ENCODE measurements at regions of chr2 and their contacts with region 1.

Region 1: GRCh38 chr2:225002039-225002655 is 40.1 kb downstream of the DOCK10 start:
- DNase-seq: peak; percentile 83
- ATAC-seq: peak; percentile 68
- H3K4me3 ChIP-seq: no peak overlapping the region
- H3K4me3 Mint-ChIP-seq: peak overlapping the region; percentile 53
- H3K27ac ChIP-seq: peak overlapping the region; percentile 22 to 51
- H3K27ac Mint-ChIP-seq: peak overlapping the region; percentile 90
- H3K4me1 ChIP-seq: peaks cover 19% of the 10 kb centered on the region in 2 donors
- H3K4me1 Mint-ChIP-seq: peaks cover 25% of the 10 kb centered on the region
- H3K27me3 ChIP-seq: no peaks in the 10 kb centered on the region
- H3K27me3 Mint-ChIP-seq: no peaks in the 10 kb centered on the region
- CTCF ChIP-seq: peak; percentile 80

Region 2: GRCh38 chr2:224807153-224807964 is 194.8 kb before region 1 on chr2:
- CTCF ChIA-PET with region 1: interaction called, 3 read pairs
- POLR2A ChIA-PET with region 1: no interaction called
- intact Hi-C with region 1: loop called (anchors 2 kb)
- DNase-seq: no peak
- ATAC-seq: no peak
- H3K4me3 ChIP-seq: no peak overlapping the region
- H3K4me3 Mint-ChIP-seq: no peak overlapping the region
- H3K27ac ChIP-seq: no peak overlapping the region
- H3K27ac Mint-ChIP-seq: no peak overlapping the region
- H3K4me1 ChIP-seq: no peaks in the 10 kb centered on the region
- H3K4me1 Mint-ChIP-seq: no peaks in the 10 kb centered on the region
- H3K27me3 ChIP-seq: no peaks in the 10 kb centered on the region
- H3K27me3 Mint-ChIP-seq: no peaks in the 10 kb centered on the region
- CTCF ChIP-seq: no peak

Region 3: GRCh38 chr2:224894356-224894755 is 107.8 kb before region 1 on chr2:
- CTCF ChIA-PET with region 1: interaction called, 17 read pairs
- POLR2A ChIA-PET with region 1: no interaction called
- intact Hi-C with region 1: loop called (anchors 1 kb)
- DNase-seq: peak; percentile 75
- ATAC-seq: peak; percentile 78
- H3K4me3 ChIP-seq: peak overlapping the region in 2 of 5 experiments; percentile 1 to 16
- H3K4me3 Mint-ChIP-seq: peak overlapping the region; percentile 77
- H3K27ac ChIP-seq: peak overlapping the region; percentile 74 to 86
- H3K27ac Mint-ChIP-seq: peak overlapping the region; percentile 93
- H3K4me1 ChIP-seq: peaks cover 25 to 26% of the 10 kb centered on the region in 2 donors
- H3K4me1 Mint-ChIP-seq: peaks cover 48% of the 10 kb centered on the region
- H3K27me3 ChIP-seq: no peaks in the 10 kb centered on the region
- H3K27me3 Mint-ChIP-seq: no peaks in the 10 kb centered on the region
- CTCF ChIP-seq: no peak

Region 4: GRCh38 chr2:224946895-224947294 is 55.3 kb before region 1 on chr2:
- CTCF ChIA-PET with region 1: interaction called, 54 read pairs
- POLR2A ChIA-PET with region 1: interaction called, 4 read pairs
- intact Hi-C with region 1: loop called (anchors 5 kb)
- DNase-seq: peak; percentile 70
- ATAC-seq: peak; percentile 71
- H3K4me3 ChIP-seq: peak overlapping the region; percentile 44 to 92 (median 71)
- H3K4me3 Mint-ChIP-seq: peak overlapping the region; percentile 88
- H3K27ac ChIP-seq: peak overlapping the region; percentile 75 to 91
- H3K27ac Mint-ChIP-seq: peak overlapping the region; percentile 95
- H3K4me1 ChIP-seq: peaks cover 66 to 76% of the 10 kb centered on the region in 2 donors
- H3K4me1 Mint-ChIP-seq: peaks cover 82% of the 10 kb centered on the region
- H3K27me3 ChIP-seq: no peaks in the 10 kb centered on the region
- H3K27me3 Mint-ChIP-seq: no peaks in the 10 kb centered on the region
- CTCF ChIP-seq: no peak

Region 5: DNA sequence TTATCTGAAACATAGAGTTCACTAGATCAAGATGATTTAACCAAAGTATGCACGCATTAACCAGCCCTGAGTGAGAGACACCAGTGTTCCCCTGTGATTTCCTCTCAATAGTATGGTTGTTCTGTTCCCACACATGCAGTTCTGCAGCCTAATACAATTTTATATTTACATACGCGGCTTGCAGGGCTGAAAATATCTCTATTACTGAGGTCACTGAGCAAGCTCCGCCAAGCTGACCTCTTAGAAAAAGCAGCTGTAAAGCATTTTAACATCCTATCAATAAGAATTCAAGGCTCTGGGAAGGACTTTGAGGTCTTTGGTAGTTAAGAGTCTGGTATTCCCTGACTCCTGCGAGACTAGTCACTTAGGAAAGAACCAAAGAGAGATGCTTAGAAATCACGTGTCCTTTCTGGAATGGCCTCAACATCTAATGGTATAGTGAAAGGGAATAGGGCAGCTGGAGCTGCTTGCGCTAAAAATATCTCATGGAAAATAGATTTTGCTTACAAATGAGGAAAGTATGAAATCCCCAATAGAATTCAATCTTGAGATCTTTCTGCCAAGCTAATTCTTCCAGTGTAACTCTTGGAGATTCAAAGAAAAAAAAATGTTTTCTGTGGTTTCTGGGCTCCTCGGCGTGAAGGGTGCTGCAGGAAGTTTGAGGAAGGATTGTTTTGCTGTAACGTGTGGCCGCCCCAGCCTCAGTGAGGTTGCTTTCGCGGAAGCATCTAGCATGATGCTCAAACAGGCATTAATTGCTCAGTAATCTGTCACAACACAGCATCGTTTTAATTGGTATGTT is 19.0 kb before region 1 on chr2:
- CTCF ChIA-PET with region 1: interaction called, 29 read pairs
- POLR2A ChIA-PET with region 1: interaction called, 3 read pairs
- intact Hi-C with region 1: no loop called
- DNase-seq: peak; percentile 45
- ATAC-seq: peak; percentile 53
- H3K4me3 ChIP-seq: peak overlapping the region in 2 of 5 experiments; percentile 28 to 44
- H3K4me3 Mint-ChIP-seq: peak overlapping the region; percentile 75
- H3K27ac ChIP-seq: peak overlapping the region in 1 of 2 donors; percentile 62
- H3K27ac Mint-ChIP-seq: peak overlapping the region; percentile 85
- H3K4me1 ChIP-seq: peaks cover 30 to 35% of the 10 kb centered on the region in 2 donors
- H3K4me1 Mint-ChIP-seq: peaks cover 47% of the 10 kb centered on the region
- H3K27me3 ChIP-seq: no peaks in the 10 kb centered on the region
- H3K27me3 Mint-ChIP-seq: no peaks in the 10 kb centered on the region
- CTCF ChIP-seq: no peak

Region 6: GRCh38 chr2:225112362-225113126 is 110.4 kb after region 1 on chr2:
- CTCF ChIA-PET with region 1: interaction called, 3 read pairs
- POLR2A ChIA-PET with region 1: no interaction called
- intact Hi-C with region 1: loop called (anchors 10 kb)
- DNase-seq: peak; percentile 33
- ATAC-seq: peak; percentile 60
- H3K4me3 ChIP-seq: no peak overlapping the region
- H3K4me3 Mint-ChIP-seq: peak overlapping the region; percentile 40
- H3K27ac ChIP-seq: peak overlapping the region in 1 of 2 donors; percentile 9
- H3K27ac Mint-ChIP-seq: peak overlapping the region; percentile 67
- H3K4me1 ChIP-seq: peaks cover 17 to 19% of the 10 kb centered on the region in 2 donors
- H3K4me1 Mint-ChIP-seq: peaks cover 24% of the 10 kb centered on the region
- H3K27me3 ChIP-seq: no peaks in the 10 kb centered on the region
- H3K27me3 Mint-ChIP-seq: no peaks in the 10 kb centered on the region
- CTCF ChIP-seq: no peak

Measured in B cell (primary cell).